Activated T-helper 2 cell treated with anti-CD3 and anti-CD28 coated beads, Interferon-gamma antibody, Interleukin-2, Interleukin-4, amounts not matched to agents 10 μg/mL and 5 μg/mL and 100 μg/mL, durations not matched to agents 14 hours and 24 hours and 36 hours (primary cell): ENCODE measurements at regions of chr7 and their contacts with region 1.

Region 1: GRCh38 chr7:129091484-129092002 is 36.6 kb upstream of the TNPO3 start:
- DNase-seq: peak; percentile 79
- H3K4me3 Mint-ChIP-seq: no peak overlapping the region
- H3K27ac Mint-ChIP-seq: no peak overlapping the region
- H3K4me1 Mint-ChIP-seq: peaks cover 25% of the 10 kb centered on the region
- H3K27me3 Mint-ChIP-seq: peaks cover 1% of the 10 kb centered on the region

Region 2: GRCh38 chr7:128904381-128905197 is 187.0 kb before region 1 on chr7:
- intact Hi-C with region 1: loop called (anchors 1 kb)
- DNase-seq: no peak
- H3K4me3 Mint-ChIP-seq: no peak overlapping the region
- H3K27ac Mint-ChIP-seq: no peak overlapping the region
- H3K4me1 Mint-ChIP-seq: no peaks in the 10 kb centered on the region
- H3K27me3 Mint-ChIP-seq: peaks cover 24% of the 10 kb centered on the region

Region 3: DNA sequence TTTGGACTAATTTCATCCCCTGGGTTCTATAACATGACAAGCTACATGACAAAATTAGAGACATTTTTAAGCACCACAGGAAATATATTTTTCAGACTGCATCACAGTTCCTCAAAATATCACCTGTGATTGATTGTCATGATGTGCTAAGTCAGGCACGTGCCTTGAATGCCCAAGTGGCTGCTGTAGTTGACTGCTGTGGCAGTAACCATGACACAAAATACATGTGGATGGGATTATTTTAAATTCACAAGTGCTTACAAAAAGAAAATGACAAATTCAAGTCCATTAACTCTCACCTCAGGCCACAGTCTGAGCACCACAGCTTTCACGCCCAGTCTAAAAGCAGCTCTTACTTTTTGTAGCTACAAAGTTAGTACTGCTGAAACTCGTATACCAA is 82.1 kb before region 1 on chr7:
- intact Hi-C with region 1: loop called (anchors 5 kb)
- DNase-seq: no peak
- H3K4me3 Mint-ChIP-seq: no peak overlapping the region
- H3K27ac Mint-ChIP-seq: peak overlapping the region; percentile 87
- H3K4me1 Mint-ChIP-seq: peaks cover 30% of the 10 kb centered on the region
- H3K27me3 Mint-ChIP-seq: no peaks in the 10 kb centered on the region

Region 4: DNA sequence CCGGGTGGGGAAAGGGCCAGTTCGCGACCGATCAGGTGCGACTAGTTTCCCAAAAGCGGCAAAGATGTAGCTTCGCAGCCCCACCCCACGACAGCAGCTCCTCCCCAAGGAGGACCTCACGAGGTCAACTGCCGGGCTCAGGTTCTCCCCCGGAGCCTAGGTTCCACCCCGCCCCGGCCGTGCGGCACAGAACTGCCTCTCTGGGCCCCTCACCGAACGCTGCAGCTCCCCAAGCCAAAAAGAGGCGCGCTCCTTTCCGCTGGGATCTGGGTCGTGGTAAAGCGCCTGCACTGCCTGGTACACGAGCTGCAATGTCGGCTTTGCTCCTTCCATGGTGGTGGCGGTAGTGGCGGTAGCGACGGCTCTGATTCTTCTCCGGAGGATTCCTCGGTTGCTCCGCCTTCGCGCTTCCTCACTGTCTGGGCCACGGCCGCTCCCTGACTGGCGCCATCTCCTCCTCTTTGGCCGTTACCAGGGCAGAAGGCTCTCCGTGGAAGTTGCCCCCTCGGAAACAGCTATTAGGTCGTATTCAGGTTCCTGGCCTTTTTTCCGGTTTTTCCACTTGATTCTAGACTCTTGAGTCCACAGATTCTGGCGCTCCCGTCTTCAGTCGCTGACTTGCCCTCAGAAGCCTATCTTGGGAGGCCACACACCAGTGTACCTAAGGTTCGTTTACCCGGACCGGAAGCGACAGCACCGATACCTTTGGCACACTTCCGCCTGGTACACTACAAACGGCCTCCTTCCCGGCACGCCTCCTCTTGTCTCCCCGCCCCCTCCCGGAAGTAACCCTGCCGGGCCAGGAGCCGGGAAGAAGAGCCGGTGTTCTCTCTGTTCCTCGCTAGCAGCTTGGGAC is 36.9 kb before region 1 on chr7 and contains the start of gene TNPO3:
- intact Hi-C with region 1: loop called (anchors 2 kb)
- DNase-seq: peak; percentile 87
- H3K4me3 Mint-ChIP-seq: peak within 1 kb of the TSS; percentile 99
- H3K27ac Mint-ChIP-seq: peak within 1 kb of the TSS; percentile 100
- H3K4me1 Mint-ChIP-seq: peaks cover 20% of the 10 kb centered on the region
- H3K27me3 Mint-ChIP-seq: peaks cover 9% of the 10 kb centered on the region
- total RNA-seq, gene TNPO3: 53.3 and 53.7 TPM in 2 replicates